HepG2 (cell line): ENCODE measurements at regions of chr1 and their contacts with region 1.

Region 1: DNA sequence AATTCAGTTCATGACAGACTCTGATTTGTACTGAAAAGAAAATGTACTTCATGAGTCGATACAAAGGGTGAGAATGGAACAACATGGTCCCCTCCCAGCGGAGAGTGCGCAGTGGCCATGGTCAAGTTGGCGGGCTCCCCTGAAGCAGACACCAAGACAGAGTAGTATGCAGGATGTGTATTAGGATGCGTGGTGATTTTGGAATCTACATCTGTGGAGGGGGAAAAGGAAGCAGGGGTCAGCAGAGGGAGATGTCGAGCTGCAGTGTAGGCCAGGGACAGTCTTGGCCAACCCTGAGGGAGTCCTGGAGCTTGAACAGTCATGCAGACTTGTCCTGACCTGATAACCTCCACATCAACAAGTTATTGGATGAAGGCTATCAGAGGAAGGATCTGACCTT is 481.0 kb downstream of the OMA1 start:
- DNase-seq: peak; percentile 3
- ATAC-seq: peak; percentile 80
- H3K4me3 ChIP-seq: no peak overlapping the region
- H3K27ac ChIP-seq: no peak overlapping the region
- H3K4me1 ChIP-seq: no peaks in the 10 kb centered on the region
- H3K27me3 ChIP-seq: no peaks in the 10 kb centered on the region
- CTCF ChIP-seq: peak; percentile 58
- EP300 ChIP-seq: no peak
- POLR2A ChIP-seq: no peak
- RAD21 ChIP-seq: no peak

Region 2: DNA sequence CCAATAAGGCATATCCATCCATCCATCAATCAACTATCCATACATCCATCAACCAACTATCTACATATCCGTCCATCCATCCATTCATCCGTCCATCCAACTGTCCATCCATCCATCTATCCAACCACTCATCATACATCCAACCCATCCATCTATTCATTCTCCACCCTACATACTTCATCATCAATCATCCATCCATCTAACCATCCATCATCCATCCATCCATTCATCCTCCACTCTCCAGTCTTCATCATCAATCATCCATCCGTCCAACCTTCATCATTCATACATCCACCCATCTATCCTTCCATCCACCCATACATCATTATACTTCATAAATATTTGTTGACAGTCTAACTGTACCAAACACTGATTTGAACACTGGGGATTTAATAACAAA is 410.4 kb before region 1 on chr1:
- CTCF ChIA-PET with region 1: no interaction called
- POLR2A ChIA-PET with region 1: no interaction called
- in situ Hi-C with region 1: no loop called
- intact Hi-C with region 1: no loop called
- DNase-seq: no peak
- ATAC-seq: no peak
- H3K4me3 ChIP-seq: no peak overlapping the region
- H3K27ac ChIP-seq: no peak overlapping the region
- H3K4me1 ChIP-seq: no peaks in the 10 kb centered on the region
- H3K27me3 ChIP-seq: no peaks in the 10 kb centered on the region
- CTCF ChIP-seq: no peak
- EP300 ChIP-seq: no peak
- POLR2A ChIP-seq: no peak
- RAD21 ChIP-seq: no peak

Region 3: DNA sequence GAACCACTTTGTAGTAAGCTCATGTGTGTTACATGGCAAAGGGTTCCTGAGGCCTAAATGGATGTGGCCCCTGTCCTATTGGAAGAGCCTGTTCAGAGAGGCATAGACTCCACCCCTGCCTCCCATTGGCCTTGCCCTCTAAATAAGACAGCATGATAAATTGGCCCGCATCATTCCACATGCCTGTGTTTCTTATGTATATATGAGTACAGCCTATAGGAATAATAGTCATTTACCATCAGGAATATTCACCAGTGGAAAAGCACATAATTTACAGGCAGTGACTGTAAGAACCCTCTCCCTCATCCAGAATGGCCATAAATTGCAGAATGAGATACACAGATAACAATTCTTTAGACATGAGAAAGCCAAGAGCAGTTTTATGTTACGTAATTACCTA is 122.2 kb before region 1 on chr1:
- CTCF ChIA-PET with region 1: no interaction called
- POLR2A ChIA-PET with region 1: no interaction called
- in situ Hi-C with region 1: no loop called
- intact Hi-C with region 1: no loop called
- DNase-seq: no peak
- ATAC-seq: no peak
- H3K4me3 ChIP-seq: no peak overlapping the region
- H3K27ac ChIP-seq: no peak overlapping the region
- H3K4me1 ChIP-seq: no peaks in the 10 kb centered on the region
- H3K27me3 ChIP-seq: no peaks in the 10 kb centered on the region
- CTCF ChIP-seq: no peak
- EP300 ChIP-seq: no peak
- POLR2A ChIP-seq: no peak
- RAD21 ChIP-seq: no peak

Region 4: GRCh38 chr1:58084266-58084665 is 18.7 kb after region 1 on chr1:
- CTCF ChIA-PET with region 1: no interaction called
- POLR2A ChIA-PET with region 1: no interaction called
- in situ Hi-C with region 1: no loop called
- intact Hi-C with region 1: no loop called
- DNase-seq: no peak
- ATAC-seq: no peak
- H3K4me3 ChIP-seq: no peak overlapping the region
- H3K27ac ChIP-seq: no peak overlapping the region
- H3K4me1 ChIP-seq: no peaks in the 10 kb centered on the region; the same call in 1 of the 2 replicates
- H3K27me3 ChIP-seq: no peaks in the 10 kb centered on the region; a peak in 1 of 5 replicates
- CTCF ChIP-seq: no peak
- EP300 ChIP-seq: no peak
- POLR2A ChIP-seq: no peak
- RAD21 ChIP-seq: no peak

Region 5: GRCh38 chr1:58162952-58163550 is 97.5 kb after region 1 on chr1:
- CTCF ChIA-PET with region 1: interaction called, 4 read pairs
- POLR2A ChIA-PET with region 1: no interaction called
- in situ Hi-C with region 1: no loop called
- intact Hi-C with region 1: loop called (anchors 5 kb)
- DNase-seq: peak; percentile 57
- ATAC-seq: peak; percentile 95
- H3K4me3 ChIP-seq: no peak overlapping the region
- H3K27ac ChIP-seq: no peak overlapping the region
- H3K4me1 ChIP-seq: no peaks in the 10 kb centered on the region
- H3K27me3 ChIP-seq: no peaks in the 10 kb centered on the region
- CTCF ChIP-seq: peak; percentile 80
- EP300 ChIP-seq: no peak
- POLR2A ChIP-seq: no peak
- RAD21 ChIP-seq: 0 out of 2 replicates have a peak, but pooled peaks have one; percentile 19